CD8-positive, alpha-beta T cell (primary cell): ENCODE measurements at regions of chr1 and their contacts with region 1.

Region 1: GRCh38 chr1:86380257-86380861 is 15.8 kb downstream of the ODF2L start:
- DNase-seq: peak in 2 of 9 experiments; percentile 72 to 79
- ATAC-seq: peak; percentile 92
- H3K4me3 ChIP-seq: no peak overlapping the region
- H3K4me3 Mint-ChIP-seq: no peak overlapping the region
- H3K27ac ChIP-seq: no peak overlapping the region
- H3K27ac Mint-ChIP-seq: no peak overlapping the region
- H3K4me1 ChIP-seq: peaks cover 11% of the 10 kb centered on the region
- H3K4me1 Mint-ChIP-seq: peaks cover 11% of the 10 kb centered on the region
- H3K27me3 ChIP-seq: no peaks in the 10 kb centered on the region
- H3K27me3 Mint-ChIP-seq: no peaks in the 10 kb centered on the region
- CTCF ChIP-seq: peak; percentile 93

Region 2: DNA sequence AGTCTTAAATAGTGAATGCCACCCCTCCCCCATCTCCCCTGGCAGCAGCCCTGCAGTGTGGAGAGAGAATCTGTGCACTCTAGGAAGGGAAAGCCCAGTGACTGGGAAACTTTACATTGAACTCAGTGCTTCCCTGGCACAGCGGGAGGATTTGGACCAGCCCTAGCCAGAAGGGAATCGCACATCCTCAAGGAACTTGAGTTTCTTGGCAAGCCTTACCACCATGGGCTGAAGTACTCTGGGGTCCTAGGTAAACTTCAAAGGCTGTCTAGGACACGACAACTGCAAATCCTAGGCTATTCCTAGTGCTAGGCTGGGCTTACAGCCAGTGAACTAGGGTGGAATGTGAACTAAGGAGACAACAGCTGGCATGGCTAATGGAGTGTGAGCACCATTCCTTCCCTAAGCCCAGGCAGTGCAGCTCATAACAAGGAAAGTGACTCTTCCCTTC is 312.1 kb before region 1 on chr1:
- CTCF ChIA-PET with region 1: no interaction called
- POLR2A ChIA-PET with region 1: no interaction called
- intact Hi-C with region 1: no loop called
- DNase-seq: no peak
- ATAC-seq: no peak
- H3K4me3 ChIP-seq: no peak overlapping the region
- H3K4me3 Mint-ChIP-seq: no peak overlapping the region
- H3K27ac ChIP-seq: no peak overlapping the region
- H3K27ac Mint-ChIP-seq: no peak overlapping the region
- H3K4me1 ChIP-seq: no peaks in the 10 kb centered on the region
- H3K4me1 Mint-ChIP-seq: no peaks in the 10 kb centered on the region
- H3K27me3 ChIP-seq: no peaks in the 10 kb centered on the region
- H3K27me3 Mint-ChIP-seq: no peaks in the 10 kb centered on the region
- CTCF ChIP-seq: no peak

Region 3: GRCh38 chr1:86395771-86396497 is 15.6 kb after region 1 on chr1 and contains the start of gene ODF2L:
- CTCF ChIA-PET with region 1: interaction called, 8 read pairs
- POLR2A ChIA-PET with region 1: interaction called, 18 read pairs
- intact Hi-C with region 1: loop called in 1 of 2 experiments (anchors 1 kb)
- DNase-seq: peak; percentile 74 to 91 (median 89)
- ATAC-seq: peak; percentile 98
- H3K4me3 ChIP-seq: peak within 1 kb of the TSS; percentile 91 to 97
- H3K4me3 Mint-ChIP-seq: peak within 1 kb of the TSS; percentile 99
- H3K27ac ChIP-seq: peak within 1 kb of the TSS; percentile 85 to 91
- H3K27ac Mint-ChIP-seq: peak within 1 kb of the TSS; percentile 97
- H3K4me1 ChIP-seq: peaks cover 16% of the 10 kb centered on the region
- H3K4me1 Mint-ChIP-seq: peaks cover 53% of the 10 kb centered on the region
- H3K27me3 ChIP-seq: no peaks in the 10 kb centered on the region
- H3K27me3 Mint-ChIP-seq: no peaks in the 10 kb centered on the region
- CTCF ChIP-seq: no peak
- total RNA-seq, gene ODF2L: 49.3 to 49.6 TPM

Region 4: DNA sequence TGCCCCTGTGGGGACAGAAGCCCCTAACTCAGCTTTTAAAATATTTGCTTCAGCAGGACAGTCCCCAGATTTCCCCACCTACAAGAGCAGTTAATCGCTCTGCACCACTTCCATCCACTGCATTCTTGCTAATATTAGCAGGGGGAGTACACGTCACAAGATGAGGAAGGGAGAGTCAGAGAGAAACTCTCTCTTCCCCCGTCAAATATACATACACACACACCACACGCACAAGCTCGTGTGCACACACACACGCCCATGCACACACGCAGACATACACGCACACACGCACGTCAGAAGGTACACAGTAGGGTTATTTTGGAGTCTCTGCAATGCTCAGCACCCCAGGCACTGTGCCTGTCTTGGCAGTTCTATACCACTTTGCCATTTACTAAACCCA is 90.5 kb after region 1 on chr1:
- CTCF ChIA-PET with region 1: interaction called, 9 read pairs
- POLR2A ChIA-PET with region 1: no interaction called
- intact Hi-C with region 1: loop called in 1 of 2 experiments (anchors 1 kb)
- DNase-seq: no peak
- ATAC-seq: no peak
- H3K4me3 ChIP-seq: no peak overlapping the region
- H3K4me3 Mint-ChIP-seq: no peak overlapping the region
- H3K27ac ChIP-seq: no peak overlapping the region
- H3K27ac Mint-ChIP-seq: no peak overlapping the region
- H3K4me1 ChIP-seq: no peaks in the 10 kb centered on the region
- H3K4me1 Mint-ChIP-seq: no peaks in the 10 kb centered on the region
- H3K27me3 ChIP-seq: peaks cover 0 to 3% of the 10 kb centered on the region in 2 experiments
- H3K27me3 Mint-ChIP-seq: peaks cover 13% of the 10 kb centered on the region
- CTCF ChIP-seq: no peak

Region 5: DNA sequence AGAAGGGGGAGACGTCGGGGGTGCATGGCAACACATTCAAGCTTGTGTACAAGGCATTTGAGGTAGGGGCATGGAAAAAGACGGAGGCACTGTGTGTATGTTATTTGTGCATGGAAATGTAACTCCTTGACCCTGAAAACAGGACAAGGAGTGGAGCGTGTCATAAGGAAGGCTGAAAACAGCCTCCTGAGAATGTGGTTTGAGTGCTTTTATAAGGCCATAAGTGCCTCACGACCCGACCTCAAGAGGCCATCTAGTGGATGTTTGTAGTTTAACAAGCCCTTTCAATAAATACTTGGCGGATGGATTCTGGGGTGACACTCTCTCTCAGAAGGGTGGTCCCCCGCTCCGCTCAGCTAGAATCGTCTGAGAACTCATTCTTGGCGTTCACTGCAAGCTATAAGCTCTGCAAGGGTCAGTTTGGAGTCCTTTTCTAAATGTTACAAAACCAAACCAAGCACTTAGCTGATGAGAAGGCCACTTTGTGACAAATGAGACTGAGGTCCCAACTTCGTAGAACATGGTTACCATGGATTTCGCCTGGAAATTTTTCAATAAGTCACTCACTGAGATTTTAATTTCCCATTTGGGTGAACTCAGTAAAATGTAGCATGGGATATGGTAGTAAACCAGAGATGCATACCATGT is 127.7 kb after region 1 on chr1:
- CTCF ChIA-PET with region 1: interaction called, 85 read pairs
- POLR2A ChIA-PET with region 1: no interaction called
- intact Hi-C with region 1: loop called (anchors 1 kb)
- DNase-seq: peak in 3 of 9 experiments; percentile 7 to 49 (median 32)
- ATAC-seq: peak; percentile 65
- H3K4me3 ChIP-seq: no peak overlapping the region
- H3K4me3 Mint-ChIP-seq: no peak overlapping the region
- H3K27ac ChIP-seq: no peak overlapping the region
- H3K27ac Mint-ChIP-seq: no peak overlapping the region
- H3K4me1 ChIP-seq: no peaks in the 10 kb centered on the region
- H3K4me1 Mint-ChIP-seq: no peaks in the 10 kb centered on the region
- H3K27me3 ChIP-seq: no peaks in the 10 kb centered on the region
- H3K27me3 Mint-ChIP-seq: peaks cover 11% of the 10 kb centered on the region
- CTCF ChIP-seq: peak; percentile 52

Region 6: DNA sequence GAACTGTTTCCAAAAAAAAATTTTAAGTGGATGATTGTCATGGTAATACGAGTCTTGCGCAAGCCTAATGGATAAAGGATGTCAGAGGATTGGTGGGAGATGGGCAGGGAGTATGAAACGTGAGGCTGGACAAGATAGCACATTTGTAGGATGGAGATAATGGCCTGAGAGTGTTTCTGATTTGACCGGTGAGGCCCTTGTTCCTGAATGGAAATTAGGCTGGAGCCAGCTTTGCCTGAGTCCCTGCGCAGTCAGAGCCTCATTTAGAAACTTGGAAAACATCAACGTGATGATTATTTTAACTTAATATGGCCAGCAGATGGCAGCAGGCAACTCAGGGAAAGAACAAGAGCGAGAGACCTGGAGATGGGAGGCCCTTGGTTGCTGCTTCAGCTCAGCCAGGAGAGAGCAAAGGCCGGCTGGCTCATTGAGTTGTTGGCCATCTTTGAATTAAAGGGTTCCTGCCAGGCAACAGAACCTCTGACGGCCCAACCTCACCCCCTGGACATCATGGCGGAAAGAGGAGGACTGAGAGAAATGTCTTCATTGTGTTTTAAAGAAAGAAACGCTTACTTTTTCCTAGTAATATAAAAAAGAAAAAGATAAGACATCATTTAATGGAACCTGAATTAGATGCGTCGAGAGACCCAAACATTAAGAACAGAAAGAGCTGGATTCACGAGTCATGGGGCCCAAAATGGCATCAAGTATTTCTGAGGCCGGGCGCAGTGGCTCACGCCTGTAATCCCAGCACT is 453.3 kb after region 1 on chr1:
- CTCF ChIA-PET with region 1: interaction called, 3 read pairs
- POLR2A ChIA-PET with region 1: no interaction called
- intact Hi-C with region 1: loop called (anchors 1 to 5 kb)
- DNase-seq: peak; percentile 4 to 76 (median 53)
- ATAC-seq: peak; percentile 72
- H3K4me3 ChIP-seq: no peak overlapping the region
- H3K4me3 Mint-ChIP-seq: no peak overlapping the region
- H3K27ac ChIP-seq: no peak overlapping the region
- H3K27ac Mint-ChIP-seq: no peak overlapping the region
- H3K4me1 ChIP-seq: no peaks in the 10 kb centered on the region
- H3K4me1 Mint-ChIP-seq: peaks cover 4% of the 10 kb centered on the region
- H3K27me3 ChIP-seq: no peaks in the 10 kb centered on the region
- H3K27me3 Mint-ChIP-seq: no peaks in the 10 kb centered on the region
- CTCF ChIP-seq: peak; percentile 64

Region 7: GRCh38 chr1:86965012-86965826 is 584.9 kb after region 1 on chr1:
- CTCF ChIA-PET with region 1: no interaction called
- POLR2A ChIA-PET with region 1: no interaction called
- intact Hi-C with region 1: loop called (anchors 5 kb)
- DNase-seq: peak in 4 of 9 experiments; percentile 13 to 53 (median 31)
- ATAC-seq: no peak
- H3K4me3 ChIP-seq: no peak overlapping the region
- H3K4me3 Mint-ChIP-seq: no peak overlapping the region
- H3K27ac ChIP-seq: no peak overlapping the region
- H3K27ac Mint-ChIP-seq: no peak overlapping the region
- H3K4me1 ChIP-seq: no peaks in the 10 kb centered on the region
- H3K4me1 Mint-ChIP-seq: no peaks in the 10 kb centered on the region
- H3K27me3 ChIP-seq: no peaks in the 10 kb centered on the region
- H3K27me3 Mint-ChIP-seq: no peaks in the 10 kb centered on the region
- CTCF ChIP-seq: peak; percentile 52